Sigmoid colon (tissue), 7 donors: ENCODE measurements at regions of chr5 and their contacts with region 1.

Region 1: DNA sequence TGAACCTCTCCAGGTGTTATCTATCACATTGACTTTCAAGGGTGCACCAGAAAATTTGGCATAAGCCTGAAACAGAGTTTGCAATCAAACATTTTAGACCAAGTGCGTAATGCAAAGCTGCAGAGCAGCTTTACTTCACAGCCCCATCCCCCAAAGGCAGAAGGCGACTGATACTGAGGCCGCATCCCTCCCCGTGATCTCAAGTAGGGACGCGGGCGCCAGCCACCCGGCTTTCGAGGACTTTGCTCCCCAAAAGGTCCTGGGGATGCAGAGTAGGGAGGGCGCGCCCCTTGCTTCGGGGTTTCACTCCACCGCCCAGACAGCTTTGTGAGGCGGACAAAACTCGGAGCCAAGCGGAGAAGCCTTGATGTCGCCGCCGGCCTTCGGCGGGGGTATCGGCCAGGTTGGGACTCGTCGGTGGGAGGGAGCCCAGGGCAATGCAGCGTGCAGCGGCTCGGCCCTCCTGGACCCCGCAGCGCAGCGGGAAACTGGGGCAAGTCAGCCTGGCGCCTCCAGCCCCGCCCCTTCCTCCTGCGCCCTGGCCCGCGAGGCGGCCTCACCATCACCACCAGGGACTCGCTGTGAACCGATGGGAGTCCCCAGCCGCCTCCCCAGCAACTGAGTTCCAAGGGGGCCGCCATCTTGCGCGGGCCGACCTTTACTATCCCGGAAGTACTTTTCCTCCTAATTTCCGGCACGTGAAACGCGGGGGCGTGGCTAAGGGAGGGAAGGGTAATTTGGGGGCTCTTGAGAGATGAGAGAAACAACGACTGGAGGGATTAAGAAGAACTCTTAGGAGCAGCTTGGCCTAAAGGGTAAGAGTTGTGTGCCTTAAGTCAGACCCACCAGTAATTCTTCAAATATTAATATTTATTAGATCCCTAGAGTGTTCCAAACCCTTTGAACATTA is at the start of gene MTX3:
- DNase-seq: peak; percentile 89
- H3K4me3 ChIP-seq: peak within 1 kb of the TSS; percentile 64 to 90 (median 88)
- H3K27ac ChIP-seq: peak within 1 kb of the TSS; percentile 76 to 82 (median 78)
- H3K4me1 ChIP-seq: peaks cover 0 to 18% (median 17%) of the 10 kb centered on the region in 4 donors
- H3K27me3 ChIP-seq: no peaks in the 10 kb centered on the region
- CTCF ChIP-seq: no peak
- EP300 ChIP-seq: no peak
- POLR2A ChIP-seq: peak in 1 of 2 donors; percentile 38
- total RNA-seq, gene MTX3: 14.5 to 18.3 (median 17.1) TPM

Region 2: DNA sequence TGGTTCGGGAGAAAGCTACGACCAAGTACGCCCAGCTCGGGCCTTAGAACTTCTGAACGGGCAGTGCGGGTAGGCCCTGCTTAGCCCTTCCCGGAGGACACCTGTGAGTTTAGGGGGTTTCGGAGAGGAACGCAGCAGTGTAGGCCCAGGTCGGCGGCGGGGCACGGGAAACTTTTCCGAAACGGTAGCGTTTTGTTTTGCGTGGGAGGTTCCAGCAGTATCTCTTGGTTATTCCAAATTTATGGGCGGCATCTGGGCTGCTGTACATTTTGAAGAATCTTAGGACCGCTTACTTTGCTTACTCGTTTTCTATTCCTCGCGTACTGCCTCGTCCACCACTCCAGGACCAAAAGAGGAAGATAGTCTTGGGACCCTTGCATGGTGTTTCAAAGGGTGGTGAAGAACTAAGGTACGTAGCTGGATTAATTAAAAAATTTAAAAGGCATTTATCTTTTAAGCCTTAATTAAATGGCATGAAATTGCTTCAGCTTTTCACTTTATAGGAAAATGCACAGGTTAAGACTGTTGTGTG is 378.1 kb before region 1 on chr5:
- intact Hi-C with region 1: loop called (anchors 2 kb)
- DNase-seq: no peak
- H3K4me3 ChIP-seq: peak overlapping the region; percentile 59 to 80 (median 68)
- H3K27ac ChIP-seq: peak overlapping the region; percentile 80 to 94 (median 90)
- H3K4me1 ChIP-seq: peaks cover 0 to 28% (median 19%) of the 10 kb centered on the region in 4 donors
- H3K27me3 ChIP-seq: no peaks in the 10 kb centered on the region
- CTCF ChIP-seq: no peak
- EP300 ChIP-seq: no peak
- POLR2A ChIP-seq: no peak

Region 3: GRCh38 chr5:80034962-80035821 is 44.3 kb after region 1 on chr5 and contains the start of gene THBS4:
- intact Hi-C with region 1: no loop called
- DNase-seq: no peak
- H3K4me3 ChIP-seq: peak within 1 kb of the TSS; percentile 16 to 45 (median 34)
- H3K27ac ChIP-seq: peak within 1 kb of the TSS in 2 of 4 donors; percentile 41 to 49
- H3K4me1 ChIP-seq: peaks cover 0 to 5% (median 2%) of the 10 kb centered on the region in 4 donors
- H3K27me3 ChIP-seq: peaks cover 11 to 58% (median 31%) of the 10 kb centered on the region in 3 donors
- CTCF ChIP-seq: no peak
- EP300 ChIP-seq: no peak
- POLR2A ChIP-seq: no peak
- total RNA-seq, gene THBS4: 55.3 to 585 (median 105) TPM

Region 4: GRCh38 chr5:80083101-80083890 is 92.4 kb after region 1 on chr5:
- intact Hi-C with region 1: loop called (anchors 5 kb)
- DNase-seq: peak; percentile 70
- H3K4me3 ChIP-seq: peak overlapping the region; percentile 2 to 39 (median 32)
- H3K27ac ChIP-seq: peak overlapping the region; percentile 62 to 76 (median 74)
- H3K4me1 ChIP-seq: peaks cover 0 to 14% (median 7%) of the 10 kb centered on the region in 4 donors
- H3K27me3 ChIP-seq: no peaks in the 10 kb centered on the region
- CTCF ChIP-seq: peak; percentile 63 to 76 (median 68)
- EP300 ChIP-seq: no peak
- POLR2A ChIP-seq: no peak

Region 5: GRCh38 chr5:80308526-80308925 is 317.7 kb after region 1 on chr5:
- intact Hi-C with region 1: loop called (anchors 10 kb)
- DNase-seq: no peak
- H3K4me3 ChIP-seq: no peak overlapping the region
- H3K27ac ChIP-seq: no peak overlapping the region
- H3K4me1 ChIP-seq: no peaks in the 10 kb centered on the region
- H3K27me3 ChIP-seq: no peaks in the 10 kb centered on the region
- CTCF ChIP-seq: no peak
- EP300 ChIP-seq: no peak
- POLR2A ChIP-seq: no peak